CD8-positive, alpha-beta T cell (primary cell): ENCODE measurements at regions of chr19 and their contacts with region 1.

Region 1: DNA sequence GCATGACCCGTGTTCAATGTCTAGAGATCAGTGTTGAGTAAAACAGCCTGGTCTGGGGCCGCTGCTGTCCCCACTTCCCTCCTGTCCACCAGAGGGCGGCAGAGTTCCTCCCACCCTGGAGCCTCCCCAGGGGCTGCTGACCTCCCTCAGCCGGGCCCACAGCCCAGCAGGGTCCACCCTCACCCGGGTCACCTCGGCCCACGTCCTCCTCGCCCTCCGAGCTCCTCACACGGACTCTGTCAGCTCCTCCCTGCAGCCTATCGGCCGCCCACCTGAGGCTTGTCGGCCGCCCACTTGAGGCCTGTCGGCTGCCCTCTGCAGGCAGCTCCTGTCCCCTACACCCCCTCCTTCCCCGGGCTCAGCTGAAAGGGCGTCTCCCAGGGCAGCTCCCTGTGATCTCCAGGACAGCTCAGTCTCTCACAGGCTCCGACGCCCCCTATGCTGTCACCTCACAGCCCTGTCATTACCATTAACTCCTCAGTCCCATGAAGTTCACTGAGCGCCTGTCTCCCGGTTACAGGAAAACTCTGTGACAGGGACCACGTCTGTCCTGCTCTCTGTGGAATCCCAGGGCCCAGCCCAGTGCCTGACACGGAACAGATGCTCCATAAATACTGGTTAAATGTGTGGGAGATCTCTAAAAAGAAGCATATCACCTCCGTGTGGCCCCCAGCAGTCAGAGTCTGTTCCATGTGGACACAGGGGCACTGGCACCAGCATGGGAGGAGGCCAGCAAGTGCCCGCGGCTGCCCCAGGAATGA is 1.5 kb upstream of the CEACAM5 start:
- DNase-seq: peak; percentile 40 to 78 (median 68)
- ATAC-seq: peak; percentile 93
- H3K4me3 ChIP-seq: peak overlapping the region; percentile 31 to 46
- H3K4me3 Mint-ChIP-seq: peak overlapping the region; percentile 65
- H3K27ac ChIP-seq: no peak overlapping the region
- H3K27ac Mint-ChIP-seq: no peak overlapping the region
- H3K4me1 ChIP-seq: no peaks in the 10 kb centered on the region
- H3K4me1 Mint-ChIP-seq: peaks cover 5% of the 10 kb centered on the region
- H3K27me3 ChIP-seq: peaks cover 2 to 13% of the 10 kb centered on the region in 2 experiments
- H3K27me3 Mint-ChIP-seq: peaks cover 36% of the 10 kb centered on the region
- CTCF ChIP-seq: peak; percentile 99

Region 2: DNA sequence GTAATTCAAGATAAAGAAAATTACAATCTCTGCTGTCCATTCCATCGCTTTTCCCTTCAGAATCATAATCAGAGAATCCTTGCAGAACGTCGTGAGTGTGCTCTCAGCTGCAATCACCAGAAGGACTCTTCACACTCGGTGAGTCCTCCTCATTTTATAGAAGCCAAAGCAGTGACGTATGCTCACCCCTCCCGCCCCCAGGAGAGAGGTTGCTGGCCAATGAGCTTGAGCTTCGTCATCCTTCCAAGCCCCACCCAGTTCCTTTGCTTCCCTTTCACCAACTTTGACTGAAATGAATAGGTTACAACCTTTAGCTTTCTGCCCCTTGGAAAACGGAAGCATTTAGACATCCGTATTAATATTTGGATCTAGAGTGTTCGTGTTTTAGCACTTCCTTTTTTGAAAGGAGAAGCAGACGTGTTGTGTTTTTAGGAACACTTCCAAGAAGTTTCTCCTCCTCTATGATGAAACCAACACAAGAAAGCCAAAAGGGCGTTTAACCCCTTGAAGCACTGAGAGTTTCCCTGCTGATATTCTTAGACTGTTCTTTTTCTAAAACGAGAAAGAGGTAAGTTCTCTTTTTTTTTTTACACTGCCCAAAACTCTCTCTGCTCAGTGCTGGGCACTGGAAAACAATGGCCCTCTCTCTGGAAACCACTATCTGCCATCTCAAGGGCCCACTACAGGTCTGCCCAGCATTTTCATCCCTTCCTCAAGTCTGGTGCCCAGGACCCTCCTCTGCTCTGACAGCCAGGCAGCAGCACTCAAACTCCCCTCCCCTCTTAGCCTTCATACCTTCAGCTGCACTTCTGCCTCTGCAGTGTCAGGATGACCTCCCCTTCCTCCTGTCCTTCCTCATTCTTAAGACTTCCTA is 175.2 kb before region 1 on chr19:
- CTCF ChIA-PET with region 1: no interaction called
- POLR2A ChIA-PET with region 1: no interaction called
- intact Hi-C with region 1: no loop called
- DNase-seq: peak; percentile 45 to 92 (median 80)
- ATAC-seq: peak; percentile 95
- H3K4me3 ChIP-seq: peak overlapping the region; percentile 23 to 40
- H3K4me3 Mint-ChIP-seq: peak overlapping the region; percentile 72
- H3K27ac ChIP-seq: peak overlapping the region; percentile 43 to 61
- H3K27ac Mint-ChIP-seq: peak overlapping the region; percentile 86
- H3K4me1 ChIP-seq: peaks cover 47% of the 10 kb centered on the region
- H3K4me1 Mint-ChIP-seq: peaks cover 48% of the 10 kb centered on the region
- H3K27me3 ChIP-seq: no peaks in the 10 kb centered on the region
- H3K27me3 Mint-ChIP-seq: peaks cover 26% of the 10 kb centered on the region
- CTCF ChIP-seq: no peak

Region 3: GRCh38 chr19:41746593-41747227 is 39.8 kb after region 1 on chr19:
- CTCF ChIA-PET with region 1: interaction called, 7 read pairs
- POLR2A ChIA-PET with region 1: no interaction called
- intact Hi-C with region 1: loop called (anchors 1 kb)
- DNase-seq: peak in 7 of 9 experiments; percentile 8 to 65 (median 39)
- ATAC-seq: peak; percentile 66
- H3K4me3 ChIP-seq: no peak overlapping the region
- H3K4me3 Mint-ChIP-seq: no peak overlapping the region
- H3K27ac ChIP-seq: no peak overlapping the region
- H3K27ac Mint-ChIP-seq: no peak overlapping the region
- H3K4me1 ChIP-seq: no peaks in the 10 kb centered on the region
- H3K4me1 Mint-ChIP-seq: peaks cover 9% of the 10 kb centered on the region
- H3K27me3 ChIP-seq: no peaks in the 10 kb centered on the region
- H3K27me3 Mint-ChIP-seq: peaks cover 54% of the 10 kb centered on the region
- CTCF ChIP-seq: peak; percentile 45